CD14-positive monocyte (primary cell): ENCODE measurements at regions of chr2 and their contacts with region 1.

Region 1: GRCh38 chr2:108920-109809 is 62.9 kb upstream of the FAM110C start:
- DNase-seq: no peak
- H3K4me3 ChIP-seq: no peak overlapping the region
- H3K4me3 Mint-ChIP-seq: no peak overlapping the region
- H3K27ac ChIP-seq: no peak overlapping the region
- H3K27ac Mint-ChIP-seq: no peak overlapping the region
- H3K4me1 ChIP-seq: no peaks in the 10 kb centered on the region
- H3K4me1 Mint-ChIP-seq: no peaks in the 10 kb centered on the region
- H3K27me3 ChIP-seq: no peaks in the 10 kb centered on the region
- H3K27me3 Mint-ChIP-seq: peaks cover 0 to 4% (median 0%) of the 10 kb centered on the region in 3 donors
- CTCF ChIP-seq: no peak

Region 2: GRCh38 chr2:287471-287885 is 178.3 kb after region 1 on chr2:
- intact Hi-C with region 1: loop called in 1 of 2 experiments (anchors 5 kb)
- DNase-seq: no peak
- H3K4me3 ChIP-seq: no peak overlapping the region
- H3K4me3 Mint-ChIP-seq: peak overlapping the region in 1 of 2 donors; percentile 70
- H3K27ac ChIP-seq: no peak overlapping the region
- H3K27ac Mint-ChIP-seq: no peak overlapping the region
- H3K4me1 ChIP-seq: peaks cover 0 to 13% of the 10 kb centered on the region in 2 donors
- H3K4me1 Mint-ChIP-seq: peaks cover 8% of the 10 kb centered on the region
- H3K27me3 ChIP-seq: peaks cover 41 to 62% of the 10 kb centered on the region in 2 donors
- H3K27me3 Mint-ChIP-seq: peaks cover 40 to 65% (median 40%) of the 10 kb centered on the region in 3 donors
- CTCF ChIP-seq: no peak